ENCODE measurements at regions of chr13 and their contacts with region 1.

Region 1: DNA sequence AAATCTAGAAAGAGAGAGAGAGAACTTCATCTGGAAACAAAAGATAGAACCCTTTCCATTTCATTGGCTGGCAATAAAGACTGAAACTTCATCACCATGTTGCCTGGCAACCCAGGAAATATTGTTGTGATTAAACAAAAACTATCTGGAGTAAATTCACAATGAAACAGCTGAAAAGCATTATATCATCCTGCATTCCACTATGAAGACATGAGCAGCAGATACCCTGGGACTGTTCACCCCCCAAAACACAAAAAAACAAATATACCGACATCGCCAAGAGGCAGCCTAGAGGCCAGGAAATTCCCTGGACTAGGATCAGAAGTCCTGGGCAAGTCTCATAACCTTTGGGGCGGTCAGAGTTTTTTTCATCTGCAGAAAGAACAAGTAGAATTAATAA is 158.3 kb downstream of the FOXO1 start:
- DNase-seq: no peak
- H3K4me3 Mint-ChIP-seq: no peak overlapping the region
- H3K27ac Mint-ChIP-seq: peak overlapping the region; percentile 4
- H3K4me1 Mint-ChIP-seq: peaks cover 57% of the 10 kb centered on the region
- H3K27me3 Mint-ChIP-seq: no peaks in the 10 kb centered on the region

Region 2: GRCh38 chr13:40494513-40494912 is 13.6 kb before region 1 on chr13:
- CTCF ChIA-PET with region 1: no interaction called
- intact Hi-C with region 1: loop called (anchors 1 kb)
- DNase-seq: no peak
- H3K4me3 Mint-ChIP-seq: peak overlapping the region; percentile 57
- H3K27ac Mint-ChIP-seq: peak overlapping the region; percentile 77
- H3K4me1 Mint-ChIP-seq: peaks cover 76% of the 10 kb centered on the region
- H3K27me3 Mint-ChIP-seq: no peaks in the 10 kb centered on the region

Region 3: GRCh38 chr13:40550130-40550529 is 42.0 kb after region 1 on chr13:
- CTCF ChIA-PET with region 1: no interaction called
- intact Hi-C with region 1: no loop called
- DNase-seq: no peak
- H3K4me3 Mint-ChIP-seq: no peak overlapping the region
- H3K27ac Mint-ChIP-seq: no peak overlapping the region
- H3K4me1 Mint-ChIP-seq: peaks cover 48% of the 10 kb centered on the region
- H3K27me3 Mint-ChIP-seq: no peaks in the 10 kb centered on the region

Measured in activated naive CD4-positive, alpha-beta T cell treated with anti-CD3 and anti-CD28 coated beads for 36 hours (primary cell).